ENCODE measurements at regions of chr10 and their contacts with region 1.

Region 1: GRCh38 chr10:102835007-102835482 is 2.2 kb downstream of the CYP17A1 start:
- DNase-seq: peak; percentile 82
- H3K4me3 Mint-ChIP-seq: no peak overlapping the region
- H3K27ac Mint-ChIP-seq: no peak overlapping the region
- H3K4me1 Mint-ChIP-seq: peaks cover 9% of the 10 kb centered on the region
- H3K27me3 Mint-ChIP-seq: peaks cover 12% of the 10 kb centered on the region
- CTCF ChIP-seq: peak; percentile 76

Region 2: DNA sequence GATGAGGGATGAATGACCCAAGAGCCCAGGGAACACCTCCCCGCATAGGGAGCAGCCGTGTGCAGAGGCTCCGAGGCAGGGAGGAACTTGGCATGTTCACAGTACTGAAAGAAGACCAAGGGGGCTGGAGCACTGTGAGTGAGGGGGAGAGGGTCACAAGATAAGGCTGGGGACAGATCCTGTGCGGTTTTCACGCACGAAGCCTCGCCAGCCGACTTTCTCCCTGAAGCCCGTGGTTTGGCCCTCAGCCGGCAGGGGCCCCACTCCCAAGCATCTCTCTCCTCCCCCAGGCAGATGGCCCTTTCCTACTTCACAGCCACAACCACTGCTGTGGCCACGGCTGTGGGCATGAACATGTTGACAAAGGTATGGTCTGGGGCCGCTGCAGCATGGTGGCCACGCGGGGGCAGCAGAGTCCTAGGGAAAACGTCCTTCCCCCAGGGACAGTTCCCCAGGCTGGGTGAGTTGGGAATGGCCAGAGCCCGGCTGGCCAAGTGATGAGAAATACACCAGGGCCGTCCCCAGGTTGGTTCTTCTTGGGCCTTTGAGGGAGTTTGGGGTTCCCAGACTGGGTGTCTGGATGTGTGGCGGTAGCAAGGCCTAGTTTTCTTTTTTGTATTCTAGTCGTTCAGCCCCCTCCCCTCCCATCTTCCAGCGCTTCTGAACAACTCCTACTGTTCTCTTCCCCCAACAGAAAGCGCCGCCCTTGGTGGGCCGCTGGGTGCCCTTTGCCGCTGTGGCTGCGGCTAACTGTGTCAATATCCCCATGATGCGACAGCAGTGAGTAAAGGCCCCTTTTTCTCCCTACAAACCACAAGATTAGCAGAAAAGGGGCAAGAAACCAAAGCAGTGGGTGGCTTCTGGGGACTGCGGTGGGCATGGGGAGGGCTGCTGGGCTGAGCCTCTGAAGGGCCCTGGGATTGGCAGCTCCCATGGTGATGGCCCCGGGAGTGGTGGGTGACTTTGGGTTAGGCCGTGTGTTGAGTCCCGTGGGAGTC is 105.7 kb before region 1 on chr10:
- CTCF ChIA-PET with region 1: interaction called, 3 read pairs
- POLR2A ChIA-PET with region 1: no interaction called
- intact Hi-C with region 1: loop called (anchors 1 kb)
- DNase-seq: peak; percentile 75
- H3K4me3 Mint-ChIP-seq: no peak overlapping the region
- H3K27ac Mint-ChIP-seq: no peak overlapping the region
- H3K4me1 Mint-ChIP-seq: peaks cover 6% of the 10 kb centered on the region
- H3K27me3 Mint-ChIP-seq: no peaks in the 10 kb centered on the region
- CTCF ChIP-seq: peak; percentile 81

Region 3: GRCh38 chr10:102894466-102895213 is 59.6 kb after region 1 on chr10:
- CTCF ChIA-PET with region 1: interaction called, 124 read pairs
- POLR2A ChIA-PET with region 1: no interaction called
- intact Hi-C with region 1: no loop called
- DNase-seq: no peak
- H3K4me3 Mint-ChIP-seq: no peak overlapping the region
- H3K27ac Mint-ChIP-seq: no peak overlapping the region
- H3K4me1 Mint-ChIP-seq: no peaks in the 10 kb centered on the region
- H3K27me3 Mint-ChIP-seq: no peaks in the 10 kb centered on the region
- CTCF ChIP-seq: no peak

Region 4: DNA sequence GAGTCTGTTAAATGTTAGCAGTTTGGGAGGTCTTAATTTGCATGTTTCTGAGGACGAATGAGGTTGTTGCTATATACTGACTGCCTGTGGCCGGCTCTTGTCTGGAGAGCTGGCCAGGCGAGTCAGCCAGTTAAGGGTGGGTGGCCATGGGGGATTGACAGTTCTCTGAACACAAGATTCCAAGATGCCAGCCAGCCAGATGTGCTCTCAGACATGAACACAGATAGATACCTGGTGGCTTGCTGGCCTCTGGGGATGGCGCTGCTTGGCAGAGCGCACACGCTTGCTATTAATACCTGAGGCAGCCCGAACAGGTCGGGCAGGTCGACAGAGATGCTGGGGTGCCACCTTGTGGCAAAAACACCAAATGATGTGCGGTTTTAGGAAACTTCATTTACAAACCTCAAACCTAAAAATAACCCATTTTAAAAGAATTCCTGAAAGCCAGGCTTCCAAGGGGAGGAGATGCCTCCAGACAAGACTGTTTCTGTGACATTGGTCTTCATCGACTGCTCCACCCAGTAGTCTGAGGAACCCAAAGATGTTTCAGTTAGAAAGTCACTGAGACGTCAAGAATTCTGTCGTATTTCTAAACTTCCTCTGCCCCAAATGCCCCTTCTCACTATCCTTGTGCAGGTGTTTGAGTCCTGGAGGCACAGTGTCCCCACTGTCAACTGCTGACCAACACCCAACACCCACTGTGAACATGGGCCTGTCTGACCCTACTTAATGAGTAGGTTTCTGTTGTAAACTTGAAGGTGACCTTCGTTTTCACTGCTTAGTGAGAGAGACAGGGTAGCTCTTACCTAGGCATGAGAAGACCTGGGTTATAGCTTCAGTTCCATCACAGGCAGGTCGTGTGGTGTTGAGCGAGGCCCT is 234.6 kb after region 1 on chr10:
- CTCF ChIA-PET with region 1: interaction called, 5 read pairs
- POLR2A ChIA-PET with region 1: no interaction called
- intact Hi-C with region 1: loop called (anchors 1 kb)
- DNase-seq: peak; percentile 59
- H3K4me3 Mint-ChIP-seq: no peak overlapping the region
- H3K27ac Mint-ChIP-seq: no peak overlapping the region
- H3K4me1 Mint-ChIP-seq: no peaks in the 10 kb centered on the region
- H3K27me3 Mint-ChIP-seq: no peaks in the 10 kb centered on the region
- CTCF ChIP-seq: peak; percentile 72

Region 5: GRCh38 chr10:103428989-103429643 is 594.1 kb after region 1 on chr10:
- CTCF ChIA-PET with region 1: no interaction called
- POLR2A ChIA-PET with region 1: no interaction called
- intact Hi-C with region 1: no loop called
- DNase-seq: no peak
- H3K4me3 Mint-ChIP-seq: no peak overlapping the region
- H3K27ac Mint-ChIP-seq: peak overlapping the region; percentile 33
- H3K4me1 Mint-ChIP-seq: no peaks in the 10 kb centered on the region
- H3K27me3 Mint-ChIP-seq: no peaks in the 10 kb centered on the region
- CTCF ChIP-seq: no peak

Region 6: GRCh38 chr10:103481974-103482531 is 647.0 kb after region 1 on chr10:
- CTCF ChIA-PET with region 1: no interaction called
- POLR2A ChIA-PET with region 1: no interaction called
- intact Hi-C with region 1: loop called (anchors 5 kb)
- DNase-seq: peak; percentile 78
- H3K4me3 Mint-ChIP-seq: no peak overlapping the region
- H3K27ac Mint-ChIP-seq: no peak overlapping the region
- H3K4me1 Mint-ChIP-seq: peaks cover 9% of the 10 kb centered on the region
- H3K27me3 Mint-ChIP-seq: no peaks in the 10 kb centered on the region
- CTCF ChIP-seq: peak; percentile 46